AG04450 (cell line): ENCODE measurements at regions of chr1 and their contacts with region 1.

Region 1: GRCh38 chr1:117054068-117054467 is 6.1 kb upstream of the TTF2 start:
- DNase-seq: no peak
- H3K4me3 ChIP-seq: no peak overlapping the region
- H3K27ac ChIP-seq: no peak overlapping the region
- H3K27me3 ChIP-seq: peaks cover 3% of the 10 kb centered on the region
- CTCF ChIP-seq: no peak

Region 2: DNA sequence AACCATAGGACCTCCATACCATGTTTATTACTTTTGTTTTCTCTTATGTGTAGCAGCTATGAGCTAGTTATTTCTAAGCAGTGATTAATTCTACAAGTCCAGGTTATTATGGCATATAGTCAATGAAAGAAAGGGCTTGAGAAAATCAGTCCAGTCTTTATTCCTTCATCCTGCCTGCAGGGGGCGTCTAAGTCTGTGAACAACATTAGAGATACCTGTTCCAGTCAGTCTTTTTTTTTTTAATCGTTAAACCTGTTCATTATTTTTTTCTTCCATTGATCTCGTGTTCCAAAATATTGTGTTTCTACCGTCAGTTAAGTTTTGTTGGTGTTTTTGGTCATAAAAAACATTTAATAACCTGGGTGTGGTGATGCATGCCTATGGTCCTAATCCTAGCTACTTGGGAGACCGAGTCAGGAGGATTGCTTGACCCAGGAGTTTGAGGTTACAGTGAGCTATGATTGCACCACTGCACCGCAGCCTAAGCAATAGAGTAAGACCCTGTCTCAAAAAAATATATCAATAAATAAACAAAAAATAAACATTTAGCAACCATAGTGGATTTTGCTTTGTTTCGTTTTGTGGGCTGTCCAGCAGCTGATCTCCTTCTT is 329.2 kb before region 1 on chr1:
- CTCF ChIA-PET with region 1: interaction called, 37 read pairs
- POLR2A ChIA-PET with region 1: no interaction called
- DNase-seq: peak; percentile 16
- H3K4me3 ChIP-seq: no peak overlapping the region
- H3K27ac ChIP-seq: no peak overlapping the region
- H3K27me3 ChIP-seq: no peaks in the 10 kb centered on the region
- CTCF ChIP-seq: peak; percentile 73

Region 3: DNA sequence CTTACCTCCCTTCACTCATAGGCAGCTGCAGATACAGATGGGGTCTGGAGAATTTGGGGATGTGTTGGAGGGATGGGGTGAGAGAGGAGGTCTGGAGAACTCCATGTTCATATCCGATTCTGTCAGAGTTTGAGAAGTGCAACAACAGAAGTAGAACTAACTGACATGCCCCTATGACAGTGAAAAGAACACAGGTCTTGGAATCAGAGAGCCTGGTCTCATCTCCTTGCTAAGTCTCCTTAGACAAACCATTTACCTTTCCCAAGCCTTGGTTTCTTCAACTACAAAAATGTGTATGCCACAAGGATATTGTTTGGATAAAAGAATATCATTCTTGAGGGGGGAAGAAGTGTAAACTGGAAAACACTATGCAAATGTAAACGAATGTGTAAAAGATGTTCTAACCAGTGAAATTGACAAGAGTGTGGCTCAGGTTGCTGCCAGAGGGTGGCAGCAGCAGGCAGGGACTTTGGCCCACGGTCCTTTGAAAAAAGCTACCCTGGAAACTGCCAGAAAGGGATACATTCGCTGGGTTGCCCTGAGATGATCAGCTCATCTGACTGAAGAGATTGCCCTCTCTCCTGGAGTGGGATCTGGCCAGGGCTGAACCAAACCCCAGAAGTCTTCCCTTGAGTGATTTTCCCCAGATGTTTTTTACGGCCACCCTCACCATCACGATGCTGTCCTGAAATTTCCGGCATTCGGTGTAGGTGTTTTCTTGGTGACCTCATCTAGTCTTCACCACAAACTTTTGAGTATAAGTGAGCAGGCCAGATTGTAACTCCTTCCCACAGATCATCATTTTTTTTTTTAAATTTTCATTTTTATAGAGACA is 316.8 kb before region 1 on chr1:
- CTCF ChIA-PET with region 1: interaction called, 50 read pairs
- POLR2A ChIA-PET with region 1: no interaction called
- DNase-seq: peak; percentile 3
- H3K4me3 ChIP-seq: no peak overlapping the region
- H3K27ac ChIP-seq: no peak overlapping the region
- H3K27me3 ChIP-seq: no peaks in the 10 kb centered on the region
- CTCF ChIP-seq: peak; percentile 76